Common myeloid progenitor, CD34-positive (primary cell): ENCODE measurements at regions of chr19 and their contacts with region 1.

Region 1: GRCh38 chr19:1241417-1242095 is at the start of gene ATP5F1D:
- DNase-seq: peak; percentile 91 to 93 (median 92)
- H3K4me3 ChIP-seq: peak within 1 kb of the TSS; percentile 68 to 92 (median 79)
- H3K27ac ChIP-seq: peak within 1 kb of the TSS in 1 of 2 experiments; percentile 79
- H3K4me1 ChIP-seq: peaks cover 0 to 74% (median 66%) of the 10 kb centered on the region in 4 experiments
- H3K27me3 ChIP-seq: peaks cover 0 to 19% (median 2%) of the 10 kb centered on the region in 5 experiments

Region 2: DNA sequence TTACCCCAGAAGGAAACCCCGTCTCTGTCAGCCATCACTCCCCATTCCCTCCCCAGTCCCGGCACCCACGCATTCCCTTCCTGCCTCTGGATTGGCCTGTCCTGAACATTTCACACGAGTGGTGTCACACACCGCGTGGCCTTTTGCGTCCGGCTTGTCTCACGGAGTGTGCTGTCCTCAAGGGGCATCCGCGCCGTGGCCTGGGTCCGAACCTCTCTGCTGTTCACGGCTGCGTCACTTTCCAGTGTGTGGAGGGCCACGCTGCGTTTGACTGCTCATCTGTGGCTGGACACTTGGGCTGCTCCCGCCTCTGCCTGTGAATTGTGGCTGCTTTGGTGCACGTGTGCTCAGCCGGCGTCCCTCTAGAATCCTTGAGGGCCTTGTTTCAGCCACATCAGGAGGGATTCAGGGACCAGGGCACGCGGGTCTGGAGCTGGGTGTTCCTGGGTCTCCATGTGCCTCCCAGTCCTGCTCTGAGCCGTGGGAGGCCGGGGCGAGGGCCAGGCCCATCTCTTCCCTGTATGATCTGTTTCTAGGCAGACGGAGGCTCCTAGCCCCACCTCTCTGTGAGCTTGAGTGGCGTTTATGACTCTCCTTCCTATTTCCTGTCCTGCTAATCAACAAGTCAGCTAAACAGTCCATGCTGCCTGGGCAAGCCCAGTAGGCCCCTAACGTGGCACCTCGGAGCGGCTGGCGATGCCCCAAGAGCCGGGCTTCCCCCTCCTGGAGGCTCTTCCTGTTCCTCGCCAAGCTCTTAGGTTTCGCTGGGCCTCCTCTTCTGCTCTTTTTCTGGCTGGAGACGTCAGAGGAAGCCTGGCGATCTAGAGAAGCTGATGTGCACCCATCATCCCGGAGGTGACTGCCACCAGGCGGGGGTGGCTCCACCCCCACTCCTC is 27.9 kb before region 1 on chr19:
- CTCF ChIA-PET with region 1: interaction called, 10 read pairs
- POLR2A ChIA-PET with region 1: interaction called, 5 read pairs
- DNase-seq: peak; percentile 94 to 98 (median 98)
- H3K4me3 ChIP-seq: peak overlapping the region in 4 of 7 experiments; percentile 40 to 63 (median 49)
- H3K27ac ChIP-seq: peak overlapping the region; percentile 83 to 89
- H3K4me1 ChIP-seq: peaks cover 0 to 49% (median 46%) of the 10 kb centered on the region in 4 experiments
- H3K27me3 ChIP-seq: no peaks in the 10 kb centered on the region

Region 3: DNA sequence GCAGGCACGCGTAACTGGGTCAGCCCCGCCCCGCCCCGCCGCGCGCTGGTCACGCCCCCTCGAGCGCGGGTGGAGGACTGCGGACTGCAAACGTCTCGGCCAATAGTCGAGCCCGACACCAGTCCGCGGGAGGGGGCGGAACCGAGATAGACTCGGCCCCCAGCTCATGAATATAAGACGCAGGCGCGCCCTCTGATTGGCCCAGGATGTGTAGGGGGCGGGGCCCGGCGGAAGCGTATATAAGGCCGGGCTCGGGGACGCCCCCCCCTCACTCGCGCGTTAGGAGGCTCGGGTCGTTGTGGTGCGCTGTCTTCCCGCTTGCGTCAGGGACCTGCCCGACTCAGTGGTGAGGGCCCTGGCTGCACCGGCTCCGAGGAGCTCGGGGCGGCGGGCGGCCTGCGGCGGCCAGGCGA is 27.5 kb after region 1 on chr19 and contains the start of gene CIRBP:
- CTCF ChIA-PET with region 1: interaction called, 268 read pairs
- POLR2A ChIA-PET with region 1: interaction called, 70 read pairs
- DNase-seq: peak; percentile 98 to 99 (median 99)
- H3K4me3 ChIP-seq: peak within 1 kb of the TSS; percentile 68 to 94 (median 83)
- H3K27ac ChIP-seq: peak within 1 kb of the TSS; percentile 90 to 94
- H3K4me1 ChIP-seq: peaks cover 8 to 79% (median 76%) of the 10 kb centered on the region in 4 experiments
- H3K27me3 ChIP-seq: peaks cover 0 to 6% (median 0%) of the 10 kb centered on the region in 5 experiments

Region 4: DNA sequence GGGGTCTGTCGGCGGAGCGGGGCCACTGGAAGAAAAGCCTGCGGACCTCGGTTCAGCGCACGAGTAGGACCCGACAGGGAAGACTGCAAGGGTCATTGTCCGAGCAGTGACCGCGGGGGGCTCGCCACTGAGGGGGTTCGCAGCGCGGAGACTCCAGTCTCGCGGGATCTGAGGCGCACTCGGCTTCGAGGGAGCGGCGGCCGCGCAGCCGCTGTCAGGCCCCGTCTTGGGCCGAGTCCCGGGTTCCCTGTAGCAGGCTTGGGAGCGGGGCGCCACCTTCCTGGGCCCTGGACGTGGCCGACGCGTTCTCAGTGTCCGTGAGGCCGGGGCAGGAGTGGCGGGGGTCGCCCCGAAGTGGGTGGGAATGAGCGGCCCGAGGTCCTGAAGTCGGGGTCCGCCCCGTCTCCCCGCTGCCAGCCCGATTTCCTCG is 33.3 kb after region 1 on chr19:
- CTCF ChIA-PET with region 1: interaction called, 268 read pairs
- POLR2A ChIA-PET with region 1: interaction called, 70 read pairs
- DNase-seq: no peak
- H3K4me3 ChIP-seq: peak overlapping the region in 5 of 7 experiments; percentile 39 to 84 (median 77)
- H3K27ac ChIP-seq: peak overlapping the region in 1 of 2 experiments; percentile 92
- H3K4me1 ChIP-seq: peaks cover 6 to 64% (median 58%) of the 10 kb centered on the region in 4 experiments
- H3K27me3 ChIP-seq: no peaks in the 10 kb centered on the region

Region 5: DNA sequence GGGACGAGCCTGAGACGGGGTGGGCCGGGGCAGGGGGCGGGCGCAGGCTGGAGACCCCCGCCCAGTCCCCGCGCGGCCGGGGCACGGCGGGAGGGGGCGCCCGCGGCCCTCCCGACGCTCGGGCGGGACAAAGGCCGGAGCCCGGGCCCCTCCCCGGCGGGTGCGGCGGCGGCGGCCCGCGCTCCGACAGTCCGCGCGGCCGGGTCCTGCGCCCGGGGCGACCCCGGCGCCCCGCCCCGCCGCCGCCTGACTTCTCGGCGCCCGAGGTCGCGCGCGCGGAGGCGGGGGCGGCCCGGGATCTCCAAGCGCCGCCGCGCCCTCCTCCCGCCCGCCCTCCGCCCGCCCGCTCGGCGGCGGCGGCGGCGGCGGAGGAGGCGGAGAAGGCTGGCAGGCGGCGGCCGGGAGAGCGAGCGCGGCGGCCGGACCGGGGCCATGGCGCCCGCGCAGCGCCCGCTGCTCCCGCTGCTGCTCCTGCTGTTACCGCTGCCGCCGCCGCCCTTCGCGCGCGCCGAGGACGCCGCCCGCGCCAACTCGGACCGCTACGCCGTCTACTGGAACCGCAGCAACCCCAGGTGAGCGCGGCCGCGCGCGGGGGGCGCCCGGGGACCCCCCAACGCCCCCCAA is 44.3 kb after region 1 on chr19 and contains the start of gene EFNA2:
- CTCF ChIA-PET with region 1: no interaction called
- POLR2A ChIA-PET with region 1: no interaction called
- DNase-seq: no peak
- H3K4me3 ChIP-seq: peak within 1 kb of the TSS in 3 of 7 experiments; percentile 19 to 33 (median 20)
- H3K27ac ChIP-seq: no peak within 1 kb of the TSS
- H3K4me1 ChIP-seq: peaks cover 0 to 10% (median 7%) of the 10 kb centered on the region in 4 experiments
- H3K27me3 ChIP-seq: peaks cover 0 to 77% (median 31%) of the 10 kb centered on the region in 5 experiments

Region 6: GRCh38 chr19:1373534-1374249 is 132.1 kb after region 1 on chr19:
- CTCF ChIA-PET with region 1: interaction called, 30 read pairs
- POLR2A ChIA-PET with region 1: no interaction called
- DNase-seq: no peak
- H3K4me3 ChIP-seq: no peak overlapping the region
- H3K27ac ChIP-seq: no peak overlapping the region
- H3K4me1 ChIP-seq: no peaks in the 10 kb centered on the region
- H3K27me3 ChIP-seq: no peaks in the 10 kb centered on the region